Calu3 (cell line): ENCODE measurements at regions of chrX and their contacts with region 1.

Region 1: DNA sequence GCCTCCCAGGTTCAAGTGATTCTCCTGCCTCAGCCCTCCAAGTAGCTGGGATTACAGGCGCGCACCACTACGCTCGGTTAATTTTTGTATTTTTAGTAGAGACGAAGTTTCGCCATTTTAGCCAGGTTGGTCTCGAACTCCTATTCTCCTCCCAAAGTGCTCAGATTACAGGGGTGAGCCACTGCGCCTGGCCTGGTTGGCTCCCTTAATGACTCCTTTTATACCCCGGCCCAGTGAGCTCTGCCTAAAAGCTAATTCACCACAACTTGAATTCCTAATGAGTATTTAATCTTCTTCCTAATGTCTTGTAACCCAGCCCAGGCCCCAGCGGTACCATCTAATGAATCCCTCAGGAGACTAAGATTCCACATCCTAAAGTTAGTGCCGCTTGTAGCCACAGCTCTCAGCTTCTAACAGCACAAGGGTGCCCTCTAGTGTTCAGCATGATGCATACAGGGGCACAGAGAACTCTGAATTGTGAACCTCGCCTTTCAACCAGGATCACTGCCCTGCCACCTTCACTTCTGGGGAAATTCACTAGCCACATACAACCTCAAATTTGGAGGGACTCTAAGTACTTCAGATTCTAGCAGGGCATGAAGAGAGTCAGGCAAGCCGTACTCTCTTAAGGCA is 89.5 kb downstream of the OR13H1 start:
- DNase-seq: peak; percentile 55
- H3K4me3 Mint-ChIP-seq: no peak overlapping the region
- H3K27ac Mint-ChIP-seq: no peak overlapping the region
- H3K4me1 Mint-ChIP-seq: no peaks in the 10 kb centered on the region
- H3K27me3 Mint-ChIP-seq: no peaks in the 10 kb centered on the region
- CTCF ChIP-seq: peak; percentile 45

Region 2: GRCh38 chrX:131262737-131263679 is 370.4 kb before region 1 on chrX:
- CTCF ChIA-PET with region 1: interaction called, 4 read pairs
- intact Hi-C with region 1: loop called (anchors 5 kb)
- DNase-seq: peak; percentile 58
- H3K4me3 Mint-ChIP-seq: no peak overlapping the region
- H3K27ac Mint-ChIP-seq: no peak overlapping the region
- H3K4me1 Mint-ChIP-seq: no peaks in the 10 kb centered on the region
- H3K27me3 Mint-ChIP-seq: no peaks in the 10 kb centered on the region
- CTCF ChIP-seq: no peak

Region 3: GRCh38 chrX:131394384-131394783 is 239.0 kb before region 1 on chrX:
- CTCF ChIA-PET with region 1: no interaction called
- intact Hi-C with region 1: no loop called
- DNase-seq: no peak
- H3K4me3 Mint-ChIP-seq: no peak overlapping the region
- H3K27ac Mint-ChIP-seq: no peak overlapping the region
- H3K4me1 Mint-ChIP-seq: no peaks in the 10 kb centered on the region
- H3K27me3 Mint-ChIP-seq: no peaks in the 10 kb centered on the region
- CTCF ChIP-seq: no peak

Region 4: GRCh38 chrX:131778269-131779218 is 145.1 kb after region 1 on chrX:
- CTCF ChIA-PET with region 1: no interaction called
- intact Hi-C with region 1: no loop called
- DNase-seq: no peak
- H3K4me3 Mint-ChIP-seq: no peak overlapping the region
- H3K27ac Mint-ChIP-seq: no peak overlapping the region
- H3K4me1 Mint-ChIP-seq: peaks cover 1% of the 10 kb centered on the region
- H3K27me3 Mint-ChIP-seq: no peaks in the 10 kb centered on the region
- CTCF ChIP-seq: no peak